ENCODE measurements at regions of chr7 and their contacts with region 1.

Region 1: DNA sequence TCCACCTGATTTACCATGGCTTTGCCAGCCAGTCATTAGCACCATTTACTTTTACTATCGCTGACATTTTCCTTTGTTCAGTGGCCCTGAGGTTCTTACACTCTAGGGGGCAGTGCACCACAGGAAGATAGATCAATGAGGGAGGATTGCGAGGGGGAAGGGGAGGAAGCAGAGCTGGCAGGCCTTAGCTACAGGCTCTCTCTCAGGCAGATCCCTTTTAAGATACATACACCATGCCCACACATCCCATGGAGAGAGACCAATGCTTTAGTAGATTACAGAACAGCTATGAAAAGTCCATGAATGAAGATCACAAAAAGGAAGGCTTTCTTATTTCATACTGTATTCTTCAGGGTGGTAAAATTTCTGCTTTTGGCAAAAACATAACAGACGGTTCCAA is 47.4 kb downstream of the DENND11 start:
- DNase-seq: peak; percentile 94
- H3K4me3 ChIP-seq: no peak overlapping the region
- H3K27ac ChIP-seq: peak overlapping the region; percentile 46
- H3K4me1 ChIP-seq: peaks cover 16% of the 10 kb centered on the region
- H3K27me3 ChIP-seq: no peaks in the 10 kb centered on the region
- CTCF ChIP-seq: peak; percentile 81
- POLR2A ChIP-seq: no peak

Region 2: GRCh38 chr7:140661121-140661520 is 993.4 kb before region 1 on chr7:
- CTCF ChIA-PET with region 1: interaction called, 10 read pairs
- POLR2A ChIA-PET with region 1: no interaction called
- dilution Hi-C with region 1: no loop called
- intact Hi-C with region 1: no loop called
- DNase-seq: no peak
- H3K4me3 ChIP-seq: no peak overlapping the region
- H3K27ac ChIP-seq: no peak overlapping the region
- H3K4me1 ChIP-seq: peaks cover 3% of the 10 kb centered on the region
- H3K27me3 ChIP-seq: peaks cover 2 to 4% of the 10 kb centered on the region in 2 experiments
- CTCF ChIP-seq: no peak
- POLR2A ChIP-seq: no peak

Region 3: DNA sequence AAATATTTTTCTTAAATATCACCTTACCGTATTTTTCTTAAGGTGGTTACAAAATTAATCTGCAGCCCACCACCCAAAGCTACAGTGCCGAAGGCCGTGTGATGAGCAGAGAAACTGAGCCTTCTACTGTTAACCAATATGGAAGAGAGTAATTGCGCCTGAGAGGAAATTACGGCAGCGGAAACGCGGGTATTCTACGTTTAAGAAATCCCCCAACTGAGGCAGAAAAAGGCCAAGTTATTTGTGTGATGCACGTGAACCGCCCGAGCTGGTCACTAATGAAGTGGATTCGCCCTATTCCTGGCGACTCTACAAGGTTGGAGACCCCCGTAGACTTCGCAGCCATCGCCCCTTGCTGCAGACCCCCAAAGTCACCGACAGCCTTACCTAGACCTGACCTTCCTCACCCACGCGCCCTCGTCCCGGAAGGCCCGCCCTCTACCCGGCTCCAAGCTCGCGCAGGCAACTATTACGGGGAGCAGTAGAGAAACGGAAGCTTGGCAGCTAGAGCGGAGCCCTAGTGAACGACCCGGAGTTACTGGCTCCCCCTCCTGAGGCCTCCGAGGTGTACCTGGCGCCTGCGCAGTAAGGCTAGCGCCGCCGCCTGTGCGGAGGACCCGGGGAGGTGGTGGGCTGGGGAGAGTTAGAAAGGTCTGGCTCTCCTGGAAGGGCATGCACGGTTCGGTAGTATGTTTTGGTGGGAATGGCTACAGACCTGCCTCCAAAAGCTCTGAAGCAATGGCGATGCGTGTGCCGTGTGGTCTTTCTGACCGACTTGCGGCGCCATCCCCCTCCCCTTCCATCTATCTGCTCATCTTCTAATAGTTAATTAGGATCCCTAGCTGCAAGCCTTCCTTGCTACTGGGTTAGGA is 639.8 kb before region 1 on chr7 and contains the start of gene MRPS33:
- CTCF ChIA-PET with region 1: interaction called, 11 read pairs
- POLR2A ChIA-PET with region 1: no interaction called
- dilution Hi-C with region 1: no loop called
- intact Hi-C with region 1: loop called (anchors 1 kb)
- DNase-seq: peak; percentile 96
- H3K4me3 ChIP-seq: peak within 1 kb of the TSS; percentile 47 to 97 (median 67)
- H3K27ac ChIP-seq: peak within 1 kb of the TSS; percentile 92
- H3K4me1 ChIP-seq: peaks cover 6% of the 10 kb centered on the region
- H3K27me3 ChIP-seq: peaks cover 2% of the 10 kb centered on the region in 2 experiments
- CTCF ChIP-seq: peak; percentile 67 to 72
- POLR2A ChIP-seq: peak; percentile 81
- total RNA-seq, gene MRPS33: 34.1 and 37.4 TPM in 2 replicates

Region 4: DNA sequence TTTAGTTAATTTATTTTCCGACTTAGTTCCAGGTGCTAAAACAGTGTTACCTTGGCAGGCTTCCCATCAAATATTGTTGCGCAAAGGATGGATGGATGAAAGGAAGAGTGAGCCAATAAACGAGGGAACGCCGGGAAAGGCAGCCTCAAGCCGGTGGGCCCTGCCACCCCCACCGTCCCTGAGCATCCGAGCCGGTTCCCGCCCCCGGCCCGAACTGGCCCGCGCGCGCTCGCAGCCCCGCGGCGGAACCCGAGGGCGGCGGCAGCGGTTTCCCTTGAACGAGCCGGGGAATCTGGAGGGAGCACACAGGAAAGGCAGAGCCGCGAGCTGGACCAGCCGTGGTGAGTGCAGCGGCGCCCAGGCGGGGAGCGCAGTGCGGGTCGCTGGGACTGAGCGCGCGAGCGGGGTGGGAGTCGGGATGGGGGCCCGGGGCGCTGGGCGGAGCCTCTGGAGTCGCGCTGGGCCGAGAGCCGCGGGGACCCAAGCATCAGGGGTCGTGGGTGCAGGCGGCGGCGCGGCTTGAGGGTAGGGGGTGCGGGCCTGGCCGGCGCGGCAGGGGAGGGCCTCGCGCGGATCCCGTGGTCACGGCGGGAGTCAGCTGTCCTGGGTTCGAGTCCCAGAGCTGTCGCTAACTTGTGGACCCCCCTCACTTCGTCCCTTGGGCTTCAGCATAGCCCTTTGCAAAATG is 103.3 kb before region 1 on chr7 and contains the start of gene AGK:
- CTCF ChIA-PET with region 1: interaction called, 6 read pairs
- POLR2A ChIA-PET with region 1: interaction called, 3 read pairs
- dilution Hi-C with region 1: no loop called
- intact Hi-C with region 1: loop called (anchors 2 kb)
- DNase-seq: peak; percentile 75
- H3K4me3 ChIP-seq: peak within 1 kb of the TSS; percentile 60 to 97 (median 82)
- H3K27ac ChIP-seq: peak within 1 kb of the TSS; percentile 38
- H3K4me1 ChIP-seq: peaks cover 13% of the 10 kb centered on the region
- H3K27me3 ChIP-seq: no peaks in the 10 kb centered on the region
- CTCF ChIP-seq: no peak
- POLR2A ChIP-seq: peak; percentile 79
- total RNA-seq, gene AGK: 33.9 and 34.3 TPM in 2 replicates

Region 5: DNA sequence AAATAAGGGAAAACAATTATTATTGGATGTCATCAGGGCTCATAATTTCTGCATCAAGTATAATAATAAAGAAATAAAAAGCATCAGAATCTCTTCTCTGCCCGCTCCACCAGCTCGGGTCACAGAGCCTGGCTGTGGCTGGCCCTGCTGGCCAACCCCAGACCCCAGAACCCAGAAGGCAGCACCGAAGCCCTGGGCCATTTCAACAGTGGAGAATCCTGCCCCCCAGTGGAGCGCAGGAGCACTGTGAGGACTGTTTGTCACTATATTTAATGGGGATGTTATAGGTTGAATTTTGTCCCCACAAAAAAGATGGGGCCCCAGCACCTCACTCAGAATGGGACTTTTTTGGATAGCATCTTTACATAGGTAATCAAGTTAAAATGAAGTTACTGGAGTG is 20.2 kb after region 1 on chr7:
- CTCF ChIA-PET with region 1: interaction called, 75 read pairs
- POLR2A ChIA-PET with region 1: no interaction called
- dilution Hi-C with region 1: no loop called
- intact Hi-C with region 1: loop called (anchors 1 kb)
- DNase-seq: no peak
- H3K4me3 ChIP-seq: peak overlapping the region in 1 of 3 experiments; percentile 34
- H3K27ac ChIP-seq: peak overlapping the region; percentile 99
- H3K4me1 ChIP-seq: peaks cover 32% of the 10 kb centered on the region
- H3K27me3 ChIP-seq: no peaks in the 10 kb centered on the region
- CTCF ChIP-seq: peak; percentile 66 to 70
- POLR2A ChIP-seq: no peak

Region 6: DNA sequence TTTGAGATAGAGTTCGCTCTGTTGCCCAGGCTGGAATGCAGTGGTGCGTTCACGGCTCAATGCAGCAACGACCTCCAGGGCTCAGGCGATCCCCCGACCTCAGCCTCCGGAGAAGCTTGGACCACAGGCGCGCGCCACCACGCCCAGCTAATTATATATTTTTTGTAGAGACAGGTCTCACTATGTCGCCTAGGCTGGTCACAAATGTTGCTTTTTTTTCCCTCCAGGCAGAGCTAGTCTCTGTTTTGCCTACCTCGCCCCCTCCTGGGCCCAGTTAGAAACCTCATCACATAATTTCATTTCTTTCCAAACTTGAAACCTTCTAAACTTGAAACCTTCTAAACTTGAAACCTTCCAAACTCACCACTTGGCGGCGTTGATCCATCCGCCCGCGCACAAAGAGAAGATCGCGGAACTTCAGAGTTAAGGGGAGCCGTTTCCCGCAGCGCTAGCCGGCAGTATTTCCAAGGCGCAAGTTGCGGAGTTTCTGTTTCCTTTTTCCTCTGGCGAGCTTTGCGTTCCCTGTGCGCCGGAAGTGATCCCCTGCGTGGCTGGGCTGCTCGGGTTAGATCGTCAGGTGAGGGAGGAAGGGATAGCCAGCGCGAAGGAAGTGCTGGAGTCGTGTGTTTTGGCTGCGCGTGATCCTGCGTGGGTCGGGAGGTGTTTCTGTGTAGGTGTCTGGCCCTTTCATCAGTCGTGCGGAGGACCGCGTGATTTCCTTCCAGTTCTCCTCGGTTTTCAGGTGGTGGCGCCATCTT is 83.5 kb after region 1 on chr7 and contains the start of gene SSBP1:
- CTCF ChIA-PET with region 1: interaction called, 83 read pairs
- POLR2A ChIA-PET with region 1: no interaction called
- dilution Hi-C with region 1: no loop called
- intact Hi-C with region 1: loop called (anchors 1 kb)
- DNase-seq: peak; percentile 99
- H3K4me3 ChIP-seq: peak within 1 kb of the TSS; percentile 74 to 99 (median 96)
- H3K27ac ChIP-seq: peak within 1 kb of the TSS; percentile 92
- H3K4me1 ChIP-seq: peaks cover 16% of the 10 kb centered on the region
- H3K27me3 ChIP-seq: no peaks in the 10 kb centered on the region
- CTCF ChIP-seq: peak; percentile 76 to 86
- POLR2A ChIP-seq: peak; percentile 89
- total RNA-seq, gene SSBP1: 164 and 169 TPM in 2 replicates

Region 7: GRCh38 chr7:142357953-142358520 is 703.5 kb after region 1 on chr7:
- CTCF ChIA-PET with region 1: no interaction called
- POLR2A ChIA-PET with region 1: no interaction called
- dilution Hi-C with region 1: no loop called
- intact Hi-C with region 1: loop called (anchors 10 kb)
- DNase-seq: peak; percentile 62
- H3K4me3 ChIP-seq: no peak overlapping the region
- H3K27ac ChIP-seq: no peak overlapping the region
- H3K4me1 ChIP-seq: no peaks in the 10 kb centered on the region
- H3K27me3 ChIP-seq: no peaks in the 10 kb centered on the region
- CTCF ChIP-seq: peak; percentile 73 to 86
- POLR2A ChIP-seq: no peak

Measured in endothelial cell of umbilical vein (primary cell).